PC-3 (cell line): ENCODE measurements at regions of chr5 and their contacts with region 1.

Region 1: GRCh38 chr5:40679155-40679913 is 381 bp upstream of the PTGER4 start:
- DNase-seq: peak; percentile 96
- ATAC-seq: peak; percentile 69
- H3K4me3 ChIP-seq: peak overlapping the region; percentile 90
- H3K27ac ChIP-seq: peak overlapping the region; percentile 92
- H3K4me1 ChIP-seq: peaks cover 39% of the 10 kb centered on the region
- H3K27me3 ChIP-seq: no peaks in the 10 kb centered on the region
- CTCF ChIP-seq: no peak

Region 2: GRCh38 chr5:40223884-40224402 is 455.4 kb before region 1 on chr5:
- CTCF ChIA-PET with region 1: no interaction called
- POLR2A ChIA-PET with region 1: no interaction called
- intact Hi-C with region 1: loop called (anchors 1 kb)
- DNase-seq: peak; percentile 90
- ATAC-seq: peak; percentile 95
- H3K4me3 ChIP-seq: peak overlapping the region; percentile 38; the same call in 1 of the 2 replicates
- H3K27ac ChIP-seq: peak overlapping the region; percentile 92
- H3K4me1 ChIP-seq: peaks cover 32% of the 10 kb centered on the region
- H3K27me3 ChIP-seq: no peaks in the 10 kb centered on the region
- CTCF ChIP-seq: no peak

Region 3: DNA sequence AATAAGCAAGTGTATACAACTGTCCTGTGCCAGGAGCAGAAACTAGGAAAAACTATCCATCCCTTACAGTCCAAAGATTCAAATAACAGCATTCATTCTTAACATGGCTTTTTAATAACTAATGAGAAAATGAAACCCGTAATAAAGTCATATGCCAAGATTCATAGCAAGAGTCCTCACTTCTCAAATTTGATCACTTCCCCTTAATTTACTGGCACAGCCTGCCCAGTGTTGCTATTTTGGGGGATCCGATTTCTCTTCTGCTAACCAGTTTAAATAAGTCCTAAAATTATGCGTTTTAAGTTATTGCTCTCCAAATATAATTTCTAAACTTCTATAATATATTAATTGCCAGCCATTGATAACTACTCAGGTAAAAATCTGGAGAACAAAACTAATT is 176.6 kb before region 1 on chr5:
- CTCF ChIA-PET with region 1: no interaction called
- POLR2A ChIA-PET with region 1: no interaction called
- intact Hi-C with region 1: loop called (anchors 2 kb)
- DNase-seq: no peak
- ATAC-seq: no peak
- H3K4me3 ChIP-seq: no peak overlapping the region
- H3K27ac ChIP-seq: peak overlapping the region; percentile 75
- H3K4me1 ChIP-seq: peaks cover 23% of the 10 kb centered on the region
- H3K27me3 ChIP-seq: no peaks in the 10 kb centered on the region
- CTCF ChIP-seq: no peak

Region 4: DNA sequence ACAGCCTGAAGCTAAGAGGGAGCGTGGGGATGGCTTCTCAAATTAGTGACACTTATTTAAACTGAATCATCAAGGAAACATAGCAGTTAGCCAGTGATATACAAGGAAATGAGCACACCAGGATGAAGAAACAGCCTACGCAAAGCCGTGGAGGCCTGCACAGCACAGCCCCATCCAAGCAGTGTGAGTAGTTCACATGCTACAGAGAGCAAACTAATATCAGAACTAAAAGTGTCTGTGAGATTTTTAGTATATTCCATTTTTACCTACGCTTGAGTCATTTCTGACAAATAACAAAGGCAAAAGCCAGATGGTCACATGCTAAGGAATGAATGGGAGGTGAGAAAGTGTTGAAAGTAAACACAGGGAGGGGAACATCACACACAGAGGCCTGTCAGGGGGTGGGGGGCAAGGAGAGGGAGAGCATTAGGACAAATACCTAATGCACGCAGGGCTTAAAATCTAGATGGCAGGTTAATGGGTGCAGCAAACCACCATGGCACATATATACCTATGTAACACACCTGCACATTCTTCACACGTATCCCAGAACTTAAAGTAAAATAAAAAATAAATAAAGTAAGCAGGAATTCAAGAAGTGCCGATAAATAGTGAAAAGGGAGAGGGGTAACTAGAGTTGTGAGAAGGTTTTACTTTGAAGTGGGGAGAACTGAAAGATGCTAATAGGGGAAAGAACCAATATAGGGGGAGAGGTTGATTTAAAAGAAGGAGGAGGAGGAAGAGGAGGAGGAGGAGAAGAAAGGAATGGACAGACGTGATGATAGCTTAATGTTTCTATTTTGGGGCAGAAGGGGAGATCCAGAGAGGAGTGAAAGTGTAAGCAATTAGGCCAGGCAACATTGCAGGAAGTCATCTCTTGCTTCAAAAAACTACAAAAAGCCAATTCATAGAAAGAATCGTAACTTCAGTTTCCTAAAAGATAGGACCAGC is 100.6 kb before region 1 on chr5:
- CTCF ChIA-PET with region 1: no interaction called
- POLR2A ChIA-PET with region 1: no interaction called
- intact Hi-C with region 1: loop called (anchors 1 kb)
- DNase-seq: peak; percentile 80
- ATAC-seq: peak; percentile 92
- H3K4me3 ChIP-seq: peak overlapping the region; percentile 23; the same call in 1 of the 2 replicates
- H3K27ac ChIP-seq: peak overlapping the region; percentile 88
- H3K4me1 ChIP-seq: peaks cover 30% of the 10 kb centered on the region
- H3K27me3 ChIP-seq: no peaks in the 10 kb centered on the region
- CTCF ChIP-seq: no peak